ENCODE measurements at regions of chr7 and their contacts with region 1.

Region 1: DNA sequence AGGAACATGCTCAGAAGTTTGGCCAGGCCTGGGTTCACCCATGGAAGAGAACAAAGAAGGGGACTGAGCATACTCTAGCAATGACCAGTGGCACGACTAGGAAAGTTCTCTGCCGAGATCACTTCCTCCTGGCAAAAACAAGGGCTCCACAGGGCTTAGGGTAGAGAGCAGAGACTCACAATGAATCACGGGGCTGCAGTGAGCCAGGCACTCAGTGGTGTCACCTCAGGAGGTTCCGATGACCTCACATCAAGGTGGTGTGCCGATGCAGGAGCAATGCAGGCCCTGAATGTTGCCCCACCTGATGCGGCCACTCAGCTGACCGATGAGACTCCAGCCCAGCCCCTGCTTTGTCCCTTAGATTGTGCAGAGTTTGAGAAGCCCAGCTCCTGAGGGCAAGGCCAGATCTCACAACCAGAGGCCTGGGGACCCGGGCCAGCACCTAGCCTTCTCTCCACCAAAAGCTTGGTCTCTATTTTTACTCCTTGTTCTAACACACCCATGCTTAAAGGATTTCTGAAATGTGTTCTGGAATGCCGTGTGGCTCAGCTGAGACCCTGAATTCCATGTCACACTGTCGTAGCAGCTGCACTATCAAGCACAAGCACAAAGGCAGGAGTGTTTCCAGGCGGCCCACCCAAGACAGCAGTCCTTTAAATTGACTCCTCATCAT is 60.9 kb downstream of the COBL start:
- DNase-seq: no peak
- ATAC-seq: peak; percentile 37 to 56 (median 54)
- H3K4me3 ChIP-seq: no peak overlapping the region
- H3K27ac ChIP-seq: peak overlapping the region in 8 of 12 donors; percentile 37 to 67 (median 50)
- H3K4me1 ChIP-seq: peaks cover 0 to 36% (median 5%) of the 10 kb centered on the region in 12 donors
- H3K27me3 ChIP-seq: no peaks in the 10 kb centered on the region
- CTCF ChIP-seq: no peak
- POLR2A ChIP-seq: no peak

Region 2: DNA sequence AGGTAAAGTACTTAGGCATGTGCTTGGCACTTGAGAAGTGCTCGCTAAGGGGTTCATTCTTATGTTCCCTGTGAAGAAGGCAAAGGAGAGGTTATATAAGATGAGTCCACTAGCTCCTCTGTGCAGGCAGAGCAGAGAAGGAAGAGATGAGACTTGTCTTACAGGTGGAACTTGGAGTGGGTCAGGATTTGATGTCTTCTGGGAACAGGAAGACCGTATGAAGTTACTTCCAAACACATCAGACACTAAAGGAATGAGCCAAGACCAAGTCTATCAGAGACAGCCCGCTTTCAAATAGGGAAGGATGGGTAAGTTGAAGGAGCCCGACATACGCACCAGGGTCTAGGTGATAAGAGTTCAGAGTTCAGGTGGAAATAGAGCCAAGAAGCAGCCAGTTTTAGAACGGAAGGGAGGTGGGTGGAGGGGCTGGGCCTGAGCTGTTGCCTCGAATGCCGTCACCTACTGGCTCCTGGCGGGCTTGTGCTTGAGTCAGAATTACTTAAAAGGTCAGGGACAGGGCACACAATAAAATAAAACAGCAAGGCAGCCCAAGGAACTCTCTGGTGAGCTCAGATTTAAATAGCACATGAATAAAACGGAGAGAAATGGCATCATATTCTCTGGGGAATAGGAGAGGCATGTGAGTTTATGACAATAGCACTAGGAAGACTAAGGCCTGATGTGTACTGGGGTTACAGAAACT is 416.8 kb before region 1 on chr7:
- intact Hi-C with region 1: no loop called
- DNase-seq: peak in 4 of 5 donors; percentile 54 to 80 (median 61)
- ATAC-seq: peak; percentile 78 to 97 (median 93)
- H3K4me3 ChIP-seq: no peak overlapping the region
- H3K27ac ChIP-seq: peak overlapping the region in 8 of 12 donors; percentile 8 to 75 (median 47)
- H3K4me1 ChIP-seq: peaks cover 0 to 12% (median 2%) of the 10 kb centered on the region in 12 donors
- H3K27me3 ChIP-seq: no peaks in the 10 kb centered on the region
- CTCF ChIP-seq: peak in 1 of 12 donors; percentile 15
- POLR2A ChIP-seq: no peak

Region 3: GRCh38 chr7:51315393-51316261 is 60.0 kb after region 1 on chr7:
- intact Hi-C with region 1: loop called in 3 of 10 experiments (anchors 5 kb)
- DNase-seq: peak in 1 of 5 donors; percentile 68
- ATAC-seq: peak; percentile 27 to 63 (median 54)
- H3K4me3 ChIP-seq: peak overlapping the region; percentile 35 to 92 (median 61)
- H3K27ac ChIP-seq: peak overlapping the region; percentile 20 to 87 (median 66)
- H3K4me1 ChIP-seq: peaks cover 0 to 29% (median 5%) of the 10 kb centered on the region in 12 donors
- H3K27me3 ChIP-seq: peaks cover 0 to 43% (median 6%) of the 10 kb centered on the region in 9 donors
- CTCF ChIP-seq: no peak
- POLR2A ChIP-seq: no peak

Region 4: GRCh38 chr7:51350200-51350921 is 94.7 kb after region 1 on chr7:
- intact Hi-C with region 1: loop called in 5 of 10 experiments (anchors 5 to 10 kb)
- DNase-seq: no peak
- ATAC-seq: peak; percentile 82 to 92 (median 88)
- H3K4me3 ChIP-seq: no peak overlapping the region
- H3K27ac ChIP-seq: peak overlapping the region in 4 of 12 donors; percentile 16 to 33 (median 22)
- H3K4me1 ChIP-seq: peaks cover 0 to 10% (median 0%) of the 10 kb centered on the region in 12 donors
- H3K27me3 ChIP-seq: no peaks in the 10 kb centered on the region
- CTCF ChIP-seq: no peak
- POLR2A ChIP-seq: no peak

Region 5: DNA sequence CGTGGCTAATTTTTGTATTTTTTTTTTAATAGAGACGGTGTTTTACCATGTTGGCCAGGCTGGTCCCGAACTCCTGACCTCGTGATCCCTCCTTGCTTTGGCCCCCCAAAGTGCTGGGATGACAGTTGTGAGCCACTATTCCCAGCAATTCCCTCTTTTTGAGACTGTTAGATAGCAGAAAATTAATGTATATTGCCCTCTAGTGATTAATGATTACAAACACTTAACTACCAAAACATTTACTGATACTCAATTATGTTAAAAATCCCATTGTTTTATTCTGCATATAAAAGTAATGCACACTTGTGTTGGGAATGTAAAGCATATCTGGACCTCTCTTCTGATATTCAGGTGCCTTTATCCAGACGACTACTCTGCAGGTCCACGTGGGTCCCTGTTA is 102.1 kb after region 1 on chr7:
- intact Hi-C with region 1: loop called in 6 of 10 experiments (anchors 5 to 10 kb)
- DNase-seq: no peak
- ATAC-seq: no peak
- H3K4me3 ChIP-seq: no peak overlapping the region
- H3K27ac ChIP-seq: peak overlapping the region in 6 of 12 donors; percentile 42 to 70 (median 62)
- H3K4me1 ChIP-seq: peaks cover 0 to 10% (median 0%) of the 10 kb centered on the region in 12 donors
- H3K27me3 ChIP-seq: no peaks in the 10 kb centered on the region
- CTCF ChIP-seq: peak in 5 of 12 donors; percentile 10 to 33 (median 14)
- POLR2A ChIP-seq: no peak

Region 6: DNA sequence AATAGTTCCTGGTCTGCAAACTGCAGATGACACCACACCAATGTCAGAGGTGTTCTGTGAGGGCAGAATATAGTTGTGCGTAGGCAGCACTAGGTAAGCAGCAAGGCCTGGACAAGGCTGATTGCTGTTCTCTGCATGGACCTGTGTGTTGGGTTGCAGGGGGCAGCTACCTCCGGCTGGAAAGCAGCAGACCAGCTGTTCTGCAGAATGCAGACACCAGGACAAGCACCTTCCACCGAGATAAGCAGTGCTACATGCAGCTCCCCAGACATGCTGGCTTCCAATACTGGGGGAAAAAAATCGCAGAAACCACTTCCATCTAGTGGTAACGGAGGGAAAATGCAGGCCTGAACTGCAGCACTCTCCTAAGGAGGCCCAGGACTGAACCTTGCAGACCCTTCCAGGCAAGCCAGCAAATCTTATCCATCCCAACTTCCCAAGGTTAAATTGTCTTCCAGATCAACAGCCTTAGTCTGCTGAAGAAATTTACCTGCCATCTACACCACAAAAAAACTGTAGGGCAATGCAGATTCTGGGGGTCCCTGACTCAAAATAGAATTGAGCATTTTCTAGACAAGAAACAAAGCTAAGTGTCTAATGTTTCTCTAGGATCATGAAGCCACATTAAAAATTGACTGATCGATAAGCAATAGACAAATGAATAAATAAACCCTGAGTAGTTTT is 111.4 kb after region 1 on chr7:
- intact Hi-C with region 1: loop called in 2 of 10 experiments (anchors 5 to 10 kb)
- DNase-seq: peak in 3 of 5 donors; percentile 26 to 36 (median 36)
- ATAC-seq: peak; percentile 71 to 94 (median 85)
- H3K4me3 ChIP-seq: no peak overlapping the region
- H3K27ac ChIP-seq: no peak overlapping the region
- H3K4me1 ChIP-seq: no peaks in the 10 kb centered on the region
- H3K27me3 ChIP-seq: no peaks in the 10 kb centered on the region
- CTCF ChIP-seq: peak; percentile 36 to 77 (median 64)
- POLR2A ChIP-seq: no peak

Measured in heart left ventricle (tissue), 16 donors.